ENCODE measurements at regions of chr4 and their contacts with region 1.

Region 1: GRCh38 chr4:119628308-119629141 is at the start of gene PDE5A:
- DNase-seq: peak; percentile 88 to 92
- H3K4me3 ChIP-seq: peak within 1 kb of the TSS; percentile 54 to 85 (median 74)
- H3K27ac ChIP-seq: peak within 1 kb of the TSS; percentile 88 to 90 (median 90)
- H3K4me1 ChIP-seq: peaks cover 0 to 5% of the 10 kb centered on the region in 2 donors
- H3K27me3 ChIP-seq: no peaks in the 10 kb centered on the region
- CTCF ChIP-seq: peak; percentile 52 to 89 (median 72)
- POLR2A ChIP-seq: peak in 1 of 2 donors; percentile 89
- total RNA-seq, gene PDE5A: 20.9 to 74.0 (median 30.2) TPM

Region 2: GRCh38 chr4:119559044-119559647 is 69.4 kb before region 1 on chr4:
- intact Hi-C with region 1: loop called (anchors 5 kb)
- DNase-seq: no peak
- H3K4me3 ChIP-seq: no peak overlapping the region
- H3K27ac ChIP-seq: no peak overlapping the region
- H3K4me1 ChIP-seq: no peaks in the 10 kb centered on the region
- H3K27me3 ChIP-seq: no peaks in the 10 kb centered on the region
- CTCF ChIP-seq: peak in 5 of 6 experiments; percentile 9 to 61 (median 55)
- POLR2A ChIP-seq: no peak

Region 3: GRCh38 chr4:119683518-119683917 is 55.0 kb after region 1 on chr4:
- intact Hi-C with region 1: no loop called
- DNase-seq: no peak
- H3K4me3 ChIP-seq: no peak overlapping the region
- H3K27ac ChIP-seq: no peak overlapping the region
- H3K4me1 ChIP-seq: no peaks in the 10 kb centered on the region
- H3K27me3 ChIP-seq: no peaks in the 10 kb centered on the region
- CTCF ChIP-seq: no peak
- POLR2A ChIP-seq: no peak

Region 4: GRCh38 chr4:120049732-120050494 is 421.4 kb after region 1 on chr4:
- intact Hi-C with region 1: loop called (anchors 5 kb)
- DNase-seq: peak; percentile 73 to 76
- H3K4me3 ChIP-seq: no peak overlapping the region
- H3K27ac ChIP-seq: no peak overlapping the region
- H3K4me1 ChIP-seq: no peaks in the 10 kb centered on the region
- H3K27me3 ChIP-seq: no peaks in the 10 kb centered on the region
- CTCF ChIP-seq: peak; percentile 47 to 88 (median 74)
- POLR2A ChIP-seq: no peak

Measured in thyroid gland (tissue), 4 donors.